Activated CD4-positive, alpha-beta T cell treated with anti-CD3 and anti-CD28 coated beads for 36 hours (primary cell): ENCODE measurements at regions of chr1 and their contacts with region 1.

Region 1: GRCh38 chr1:203702130-203702577 is 62.8 kb upstream of the LAX1 start:
- DNase-seq: peak; percentile 75
- ATAC-seq: peak; percentile 79
- H3K4me3 Mint-ChIP-seq: no peak overlapping the region
- H3K27ac Mint-ChIP-seq: peak overlapping the region; percentile 76
- H3K4me1 Mint-ChIP-seq: peaks cover 2% of the 10 kb centered on the region
- H3K27me3 Mint-ChIP-seq: no peaks in the 10 kb centered on the region

Region 2: DNA sequence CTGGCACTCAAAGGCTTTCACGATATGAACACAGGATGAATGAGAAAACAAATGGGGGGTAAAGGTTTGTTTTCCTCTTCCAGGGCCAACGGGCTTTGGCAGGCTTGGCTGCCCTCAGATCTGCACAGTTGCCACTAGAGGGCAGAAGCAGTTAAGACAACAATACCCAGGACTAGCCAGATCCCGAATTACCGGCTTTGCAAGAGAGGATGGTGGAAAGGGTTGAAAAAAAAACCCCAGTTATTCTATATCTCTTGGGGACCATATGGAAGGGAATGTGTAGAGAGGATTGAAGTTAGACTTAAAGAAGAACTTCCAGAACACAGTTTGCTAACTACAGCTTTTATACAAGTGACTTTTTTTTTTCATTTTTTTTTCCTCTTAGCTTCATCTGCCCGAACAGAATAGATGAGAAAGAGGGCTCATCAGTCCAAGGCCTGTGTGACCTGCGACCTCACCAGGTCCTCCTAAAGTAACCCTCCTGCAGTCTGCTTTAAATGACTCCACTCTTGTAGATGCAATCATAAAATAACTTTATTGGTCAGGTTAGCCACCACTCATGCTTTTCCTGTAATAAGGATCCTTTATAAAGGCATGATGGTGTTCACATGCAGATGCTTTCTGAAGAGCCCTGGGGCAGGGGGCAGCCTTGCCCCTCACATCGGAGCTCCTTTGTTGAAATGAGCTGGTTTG is 361.9 kb before region 1 on chr1:
- CTCF ChIA-PET with region 1: interaction called, 4 read pairs
- POLR2A ChIA-PET with region 1: no interaction called
- intact Hi-C with region 1: loop called (anchors 1 kb)
- DNase-seq: peak; percentile 75
- ATAC-seq: peak; percentile 76
- H3K4me3 Mint-ChIP-seq: no peak overlapping the region
- H3K27ac Mint-ChIP-seq: no peak overlapping the region
- H3K4me1 Mint-ChIP-seq: peaks cover 27% of the 10 kb centered on the region
- H3K27me3 Mint-ChIP-seq: peaks cover 7% of the 10 kb centered on the region

Region 3: DNA sequence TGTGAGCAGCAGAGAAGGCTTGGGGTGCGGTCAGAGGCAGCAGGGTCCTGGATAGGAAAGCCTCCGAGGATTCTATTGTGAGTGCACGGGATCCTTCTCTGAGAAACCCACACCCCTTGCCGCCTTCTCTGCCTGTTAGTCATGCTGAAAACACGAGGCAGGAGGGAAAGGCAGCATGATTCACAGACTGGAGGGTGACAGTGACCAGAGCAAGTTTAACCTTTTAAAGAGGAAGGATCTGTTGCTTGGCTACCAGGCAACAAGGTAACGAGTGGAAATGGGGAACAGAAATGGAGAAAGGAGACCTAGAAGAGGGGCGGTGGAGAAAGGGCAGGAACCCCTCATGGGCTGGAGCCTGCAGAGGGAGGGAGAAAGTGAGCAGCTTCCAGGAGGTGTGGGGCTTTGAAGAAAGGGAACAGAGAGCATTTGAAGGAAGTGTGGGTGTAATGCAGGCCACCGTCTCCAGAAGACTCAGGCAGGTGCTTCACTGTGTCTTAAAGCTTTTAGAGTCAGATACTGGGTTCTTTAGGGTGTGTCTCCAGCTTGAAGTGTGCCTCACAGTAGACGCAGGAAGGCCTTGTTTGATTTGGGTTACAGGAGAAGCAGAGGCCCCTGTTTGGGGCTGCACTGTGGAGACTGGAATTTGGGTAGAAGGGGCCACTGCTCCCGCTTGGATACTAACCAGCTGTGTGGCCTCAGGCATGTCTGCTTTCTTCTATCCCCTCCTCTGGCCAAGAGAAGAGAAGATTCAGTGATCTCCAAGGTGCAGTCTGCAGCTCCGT is 189.1 kb before region 1 on chr1:
- CTCF ChIA-PET with region 1: interaction called, 134 read pairs
- POLR2A ChIA-PET with region 1: no interaction called
- intact Hi-C with region 1: loop called in 1 of 2 experiments (anchors 2 kb)
- DNase-seq: peak; percentile 81
- ATAC-seq: peak; percentile 88
- H3K4me3 Mint-ChIP-seq: peak overlapping the region; percentile 6
- H3K27ac Mint-ChIP-seq: peak overlapping the region; percentile 83
- H3K4me1 Mint-ChIP-seq: peaks cover 36% of the 10 kb centered on the region
- H3K27me3 Mint-ChIP-seq: no peaks in the 10 kb centered on the region

Region 4: GRCh38 chr1:203649999-203650855 is 51.9 kb before region 1 on chr1:
- CTCF ChIA-PET with region 1: interaction called, 19 read pairs
- POLR2A ChIA-PET with region 1: interaction called, 3 read pairs
- intact Hi-C with region 1: no loop called
- DNase-seq: peak; percentile 81
- ATAC-seq: peak; percentile 43
- H3K4me3 Mint-ChIP-seq: peak overlapping the region; percentile 59
- H3K27ac Mint-ChIP-seq: peak overlapping the region; percentile 89
- H3K4me1 Mint-ChIP-seq: peaks cover 74% of the 10 kb centered on the region
- H3K27me3 Mint-ChIP-seq: no peaks in the 10 kb centered on the region

Region 5: DNA sequence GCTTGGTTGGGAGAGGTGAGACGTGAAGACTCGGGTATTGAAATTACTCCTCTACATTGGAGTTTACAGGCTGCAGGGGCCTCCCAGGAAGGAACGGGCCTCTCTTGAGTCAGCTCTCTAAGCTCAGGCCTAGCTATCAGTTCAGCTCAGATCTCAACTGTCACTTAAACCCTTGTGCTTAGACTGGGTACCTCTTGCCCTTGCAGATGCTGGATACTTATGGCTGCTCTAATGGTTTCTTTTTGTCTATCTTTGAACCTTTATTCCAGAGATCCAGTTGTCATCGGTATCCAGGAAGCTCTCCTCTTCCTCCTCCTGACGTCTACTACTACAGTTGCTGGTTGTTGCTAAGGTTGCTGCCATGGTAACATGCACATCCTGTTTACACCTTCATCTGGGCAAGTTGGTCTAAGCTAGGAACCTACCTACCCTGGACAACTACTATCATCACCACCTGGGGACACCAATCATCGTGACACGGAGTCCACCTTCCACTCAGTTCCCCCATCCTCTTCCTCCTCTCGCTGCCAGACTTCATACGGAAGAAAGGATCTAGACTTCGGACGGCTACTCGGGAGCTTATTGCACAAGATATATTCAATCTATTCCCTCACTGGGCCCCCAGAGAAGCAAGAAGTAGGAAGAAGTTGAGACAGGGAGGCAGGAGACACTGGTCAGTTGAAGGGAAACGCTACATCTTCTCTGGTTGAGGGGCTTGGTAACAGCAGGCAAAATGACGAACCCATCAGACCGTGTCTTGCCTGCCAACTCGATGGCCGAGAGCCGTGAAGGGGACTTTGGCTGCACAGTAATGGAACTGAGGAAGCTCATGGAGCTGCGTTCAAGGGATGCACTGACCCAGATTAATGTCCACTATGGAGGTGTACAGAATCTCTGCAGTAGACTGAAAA is 19.4 kb before region 1 on chr1:
- CTCF ChIA-PET with region 1: interaction called, 35 read pairs
- POLR2A ChIA-PET with region 1: no interaction called
- intact Hi-C with region 1: no loop called
- DNase-seq: peak; percentile 73
- ATAC-seq: peak; percentile 92
- H3K4me3 Mint-ChIP-seq: peak overlapping the region; percentile 32
- H3K27ac Mint-ChIP-seq: peak overlapping the region; percentile 80
- H3K4me1 Mint-ChIP-seq: peaks cover 37% of the 10 kb centered on the region
- H3K27me3 Mint-ChIP-seq: no peaks in the 10 kb centered on the region